ENCODE measurements at regions of chr11 and their contacts with region 1.

Region 1: DNA sequence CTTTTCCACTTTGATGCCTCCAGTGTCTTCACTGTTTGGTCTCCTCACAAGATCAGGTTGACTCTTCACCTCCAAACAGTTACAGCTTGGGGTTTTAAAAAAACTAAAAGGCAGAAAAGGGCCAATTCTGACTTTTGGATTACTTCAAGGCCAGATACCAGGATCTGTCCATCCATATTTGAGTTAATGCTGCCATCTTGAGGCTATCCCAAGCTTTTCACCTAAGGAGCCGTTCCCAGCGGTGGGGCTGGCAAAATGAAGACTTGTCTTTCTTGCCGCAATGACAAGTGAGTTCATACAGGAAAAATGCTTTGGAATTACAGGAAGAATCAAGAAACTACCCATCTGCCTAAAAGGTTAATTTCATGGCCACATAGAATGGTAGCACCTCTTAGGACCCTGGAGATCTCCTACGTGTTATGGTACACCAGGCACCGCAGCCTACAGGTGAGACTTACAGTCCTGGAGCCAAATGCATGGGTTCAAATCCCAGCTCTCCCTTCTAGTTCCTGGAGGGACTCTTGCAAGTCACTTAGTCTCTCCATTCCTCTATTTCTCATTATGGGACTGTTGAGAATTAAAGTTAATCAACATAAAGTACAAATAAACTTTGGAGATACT is 6.0 kb upstream of the OR5B21 start:
- DNase-seq: peak; percentile 76
- ATAC-seq: peak; percentile 90
- H3K4me3 ChIP-seq: no peak overlapping the region
- H3K27ac ChIP-seq: no peak overlapping the region
- H3K4me1 ChIP-seq: peaks cover 5% of the 10 kb centered on the region
- H3K27me3 ChIP-seq: no peaks in the 10 kb centered on the region
- CTCF ChIP-seq: peak; percentile 84
- POLR2A ChIP-seq: no peak
- RAD21 ChIP-seq: peak; percentile 95

Region 2: GRCh38 chr11:57456960-57457642 is 1056.8 kb before region 1 on chr11:
- CTCF ChIA-PET with region 1: no interaction called
- POLR2A ChIA-PET with region 1: no interaction called
- dilution Hi-C with region 1: no loop called
- in situ Hi-C with region 1: no loop called
- intact Hi-C with region 1: loop called (anchors 5 kb)
- DNase-seq: peak; percentile 77
- ATAC-seq: peak; percentile 89
- H3K4me3 ChIP-seq: no peak overlapping the region
- H3K27ac ChIP-seq: no peak overlapping the region
- H3K4me1 ChIP-seq: peaks cover 3% of the 10 kb centered on the region; the same call in 1 of the 2 replicates
- H3K27me3 ChIP-seq: peaks cover 51% of the 10 kb centered on the region
- CTCF ChIP-seq: peak; percentile 97
- POLR2A ChIP-seq: no peak
- RAD21 ChIP-seq: peak; percentile 92

Region 3: GRCh38 chr11:57741132-57742086 is 772.4 kb before region 1 on chr11 and contains the start of gene SELENOH:
- CTCF ChIA-PET with region 1: no interaction called
- POLR2A ChIA-PET with region 1: interaction called, 3 read pairs
- dilution Hi-C with region 1: no loop called
- in situ Hi-C with region 1: loop called (anchors 10 kb)
- intact Hi-C with region 1: loop called (anchors 5 kb)
- DNase-seq: peak; percentile 98
- ATAC-seq: peak; percentile 97
- H3K4me3 ChIP-seq: peak within 1 kb of the TSS; percentile 63
- H3K27ac ChIP-seq: peak within 1 kb of the TSS; percentile 86
- H3K4me1 ChIP-seq: peaks cover 2% of the 10 kb centered on the region; the same call in 1 of the 2 replicates
- H3K27me3 ChIP-seq: no peaks in the 10 kb centered on the region
- CTCF ChIP-seq: no peak
- POLR2A ChIP-seq: peak; percentile 88
- RAD21 ChIP-seq: no peak; the same call in 1 of the 2 replicates
- total RNA-seq, gene SELENOH: 40.3 and 48.9 TPM in 2 replicates

Region 4: DNA sequence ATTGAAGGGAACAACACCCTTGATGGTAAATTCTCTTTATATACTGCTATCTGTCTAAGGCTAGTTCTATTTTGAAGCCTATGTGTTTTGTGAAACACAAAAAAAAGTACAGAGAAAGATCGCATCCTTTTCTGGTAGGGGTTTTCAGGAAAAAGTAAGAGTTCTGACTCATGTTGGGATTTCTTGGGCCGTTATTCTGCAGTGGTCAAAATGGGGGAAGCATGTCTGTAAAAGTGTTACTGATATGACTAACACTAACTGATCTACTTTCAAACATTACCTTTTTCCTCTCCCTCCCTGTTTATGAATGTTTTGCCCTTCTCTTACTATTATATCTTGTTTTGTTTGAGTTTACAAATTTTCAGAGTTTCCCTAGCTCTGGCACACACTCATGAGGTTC is 698.4 kb before region 1 on chr11:
- CTCF ChIA-PET with region 1: interaction called, 4 read pairs
- POLR2A ChIA-PET with region 1: no interaction called
- dilution Hi-C with region 1: no loop called
- in situ Hi-C with region 1: loop called (anchors 10 kb)
- intact Hi-C with region 1: loop called (anchors 2 kb)
- DNase-seq: no peak
- ATAC-seq: no peak
- H3K4me3 ChIP-seq: no peak overlapping the region
- H3K27ac ChIP-seq: no peak overlapping the region
- H3K4me1 ChIP-seq: peaks cover 2% of the 10 kb centered on the region; the same call in 1 of the 2 replicates
- H3K27me3 ChIP-seq: no peaks in the 10 kb centered on the region
- CTCF ChIP-seq: no peak
- POLR2A ChIP-seq: no peak
- RAD21 ChIP-seq: no peak

Region 5: DNA sequence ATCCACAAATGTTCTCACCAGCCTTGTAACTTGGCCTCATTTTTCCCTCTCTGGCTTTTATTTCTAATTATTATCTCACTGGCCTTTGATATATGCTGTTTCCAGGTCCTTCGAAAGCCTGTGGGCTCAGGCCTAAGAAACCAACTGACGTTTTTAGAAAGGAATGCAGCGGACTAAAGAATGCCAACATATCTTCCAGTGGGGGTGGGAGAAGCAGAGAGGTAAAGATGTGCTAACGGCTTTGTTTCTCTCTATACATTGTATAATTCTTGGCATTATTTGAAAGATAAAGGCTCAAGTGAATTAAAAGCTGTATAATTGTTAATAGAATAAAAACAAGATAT is 454.9 kb before region 1 on chr11:
- CTCF ChIA-PET with region 1: no interaction called
- POLR2A ChIA-PET with region 1: no interaction called
- dilution Hi-C with region 1: no loop called
- in situ Hi-C with region 1: no loop called
- intact Hi-C with region 1: loop called (anchors 2 kb)
- DNase-seq: peak; percentile 92
- ATAC-seq: peak; percentile 81
- H3K4me3 ChIP-seq: no peak overlapping the region
- H3K27ac ChIP-seq: peak overlapping the region; percentile 99
- H3K4me1 ChIP-seq: peaks cover 32% of the 10 kb centered on the region
- H3K27me3 ChIP-seq: no peaks in the 10 kb centered on the region
- CTCF ChIP-seq: no peak
- POLR2A ChIP-seq: no peak
- RAD21 ChIP-seq: peak; percentile 5; the same call in 1 of the 2 replicates

Region 6: DNA sequence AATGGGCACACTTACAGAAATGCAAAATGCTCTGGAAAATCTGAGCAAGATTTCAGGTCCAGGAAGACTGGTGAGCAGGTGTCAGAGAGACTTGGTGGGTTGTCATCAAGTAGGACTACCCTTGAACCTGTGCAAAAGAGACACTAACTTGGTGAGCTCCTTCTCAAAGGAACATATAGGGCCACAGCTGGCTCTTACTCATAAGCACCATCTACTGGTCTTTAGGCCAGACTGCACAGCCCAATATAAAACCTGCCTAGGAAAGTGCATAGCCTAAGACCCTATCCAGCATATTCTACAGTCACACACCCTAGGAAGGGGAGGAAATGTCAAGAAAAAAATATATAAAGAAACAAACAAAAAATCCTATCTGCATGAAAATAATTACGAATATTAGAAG is 227.6 kb before region 1 on chr11:
- CTCF ChIA-PET with region 1: no interaction called
- POLR2A ChIA-PET with region 1: no interaction called
- dilution Hi-C with region 1: no loop called
- in situ Hi-C with region 1: no loop called
- intact Hi-C with region 1: loop called (anchors 2 kb)
- DNase-seq: peak; percentile 60
- ATAC-seq: peak; percentile 98
- H3K4me3 ChIP-seq: no peak overlapping the region
- H3K27ac ChIP-seq: no peak overlapping the region
- H3K4me1 ChIP-seq: peaks cover 10% of the 10 kb centered on the region; the same call in 1 of the 2 replicates
- H3K27me3 ChIP-seq: no peaks in the 10 kb centered on the region
- CTCF ChIP-seq: peak; percentile 75
- POLR2A ChIP-seq: no peak
- RAD21 ChIP-seq: peak; percentile 76

Region 7: DNA sequence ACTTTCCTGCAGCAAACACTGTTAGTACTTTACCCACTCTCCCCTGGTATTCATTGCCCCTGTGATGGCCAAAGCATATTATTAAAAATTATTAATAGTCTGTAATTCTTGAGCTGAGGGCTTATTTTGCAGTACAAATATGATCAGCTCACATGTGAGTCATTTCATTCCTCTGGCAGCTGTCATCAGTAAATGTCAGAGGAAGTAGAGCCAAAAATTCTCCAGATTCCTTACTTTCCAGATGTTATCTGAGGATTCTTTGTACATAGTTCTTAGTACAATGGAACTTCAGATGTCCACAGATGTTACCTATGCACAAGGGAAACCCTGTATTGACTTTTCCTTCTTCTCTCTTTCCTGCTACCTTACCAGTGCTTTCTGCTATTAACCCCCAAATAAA is 119.7 kb before region 1 on chr11:
- CTCF ChIA-PET with region 1: interaction called, 4 read pairs
- POLR2A ChIA-PET with region 1: interaction called, 4 read pairs
- dilution Hi-C with region 1: no loop called
- in situ Hi-C with region 1: no loop called
- intact Hi-C with region 1: loop called (anchors 5 kb)
- DNase-seq: peak; percentile 82
- ATAC-seq: peak; percentile 30
- H3K4me3 ChIP-seq: no peak overlapping the region
- H3K27ac ChIP-seq: no peak overlapping the region; the same call in 1 of the 2 replicates
- H3K4me1 ChIP-seq: peaks cover 13% of the 10 kb centered on the region; the same call in 1 of the 2 replicates
- H3K27me3 ChIP-seq: no peaks in the 10 kb centered on the region
- CTCF ChIP-seq: no peak
- POLR2A ChIP-seq: no peak
- RAD21 ChIP-seq: no peak

Region 8: DNA sequence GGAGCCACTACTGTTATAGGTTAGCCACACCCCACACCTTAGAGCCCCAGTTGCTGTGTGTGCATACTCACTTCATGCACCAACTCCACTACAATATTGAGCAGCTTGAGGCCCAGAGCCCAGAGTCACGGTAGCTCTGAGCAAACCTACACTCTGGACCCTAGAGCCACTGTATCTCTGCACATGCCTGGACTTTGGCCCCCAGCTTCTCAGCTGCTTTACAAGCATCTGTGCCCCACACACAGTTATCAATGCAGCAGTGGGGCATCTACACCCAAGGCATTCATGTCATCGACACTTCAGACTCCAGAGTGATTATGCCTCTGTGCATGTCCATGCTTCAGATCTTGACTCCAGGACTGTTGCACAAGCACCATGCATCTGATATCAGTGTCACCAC is 69.6 kb before region 1 on chr11:
- CTCF ChIA-PET with region 1: no interaction called
- POLR2A ChIA-PET with region 1: no interaction called
- dilution Hi-C with region 1: no loop called
- in situ Hi-C with region 1: no loop called
- intact Hi-C with region 1: no loop called
- DNase-seq: no peak
- ATAC-seq: no peak
- H3K4me3 ChIP-seq: no peak overlapping the region
- H3K27ac ChIP-seq: no peak overlapping the region
- H3K4me1 ChIP-seq: no peaks in the 10 kb centered on the region
- H3K27me3 ChIP-seq: no peaks in the 10 kb centered on the region
- CTCF ChIP-seq: no peak
- POLR2A ChIP-seq: no peak
- RAD21 ChIP-seq: no peak

Region 9: DNA sequence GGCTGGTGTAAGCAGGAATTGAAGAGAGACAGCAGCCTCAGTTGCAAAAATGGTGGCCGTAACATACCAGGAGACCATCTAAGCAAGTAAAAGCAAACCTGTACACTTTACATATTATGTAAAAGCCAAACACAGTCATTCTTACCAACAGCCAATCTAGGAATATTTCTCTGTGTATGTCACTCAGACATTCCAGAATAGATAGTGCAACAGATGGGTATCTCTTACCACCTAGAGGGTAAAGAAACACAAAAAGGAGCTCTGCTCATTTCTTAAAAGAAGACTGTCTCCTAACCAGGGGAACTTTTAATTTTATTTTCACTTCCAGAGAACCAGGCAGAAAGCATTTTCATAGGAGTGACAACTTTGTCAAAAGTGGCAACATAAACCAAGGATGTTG is 179.2 kb after region 1 on chr11:
- CTCF ChIA-PET with region 1: no interaction called
- POLR2A ChIA-PET with region 1: no interaction called
- dilution Hi-C with region 1: no loop called
- in situ Hi-C with region 1: no loop called
- intact Hi-C with region 1: no loop called
- DNase-seq: no peak
- ATAC-seq: no peak
- H3K4me3 ChIP-seq: no peak overlapping the region
- H3K27ac ChIP-seq: no peak overlapping the region
- H3K4me1 ChIP-seq: no peaks in the 10 kb centered on the region
- H3K27me3 ChIP-seq: no peaks in the 10 kb centered on the region
- CTCF ChIP-seq: no peak
- POLR2A ChIP-seq: no peak
- RAD21 ChIP-seq: no peak